ENCODE measurements at regions of chrX and their contacts with region 1.

Region 1: DNA sequence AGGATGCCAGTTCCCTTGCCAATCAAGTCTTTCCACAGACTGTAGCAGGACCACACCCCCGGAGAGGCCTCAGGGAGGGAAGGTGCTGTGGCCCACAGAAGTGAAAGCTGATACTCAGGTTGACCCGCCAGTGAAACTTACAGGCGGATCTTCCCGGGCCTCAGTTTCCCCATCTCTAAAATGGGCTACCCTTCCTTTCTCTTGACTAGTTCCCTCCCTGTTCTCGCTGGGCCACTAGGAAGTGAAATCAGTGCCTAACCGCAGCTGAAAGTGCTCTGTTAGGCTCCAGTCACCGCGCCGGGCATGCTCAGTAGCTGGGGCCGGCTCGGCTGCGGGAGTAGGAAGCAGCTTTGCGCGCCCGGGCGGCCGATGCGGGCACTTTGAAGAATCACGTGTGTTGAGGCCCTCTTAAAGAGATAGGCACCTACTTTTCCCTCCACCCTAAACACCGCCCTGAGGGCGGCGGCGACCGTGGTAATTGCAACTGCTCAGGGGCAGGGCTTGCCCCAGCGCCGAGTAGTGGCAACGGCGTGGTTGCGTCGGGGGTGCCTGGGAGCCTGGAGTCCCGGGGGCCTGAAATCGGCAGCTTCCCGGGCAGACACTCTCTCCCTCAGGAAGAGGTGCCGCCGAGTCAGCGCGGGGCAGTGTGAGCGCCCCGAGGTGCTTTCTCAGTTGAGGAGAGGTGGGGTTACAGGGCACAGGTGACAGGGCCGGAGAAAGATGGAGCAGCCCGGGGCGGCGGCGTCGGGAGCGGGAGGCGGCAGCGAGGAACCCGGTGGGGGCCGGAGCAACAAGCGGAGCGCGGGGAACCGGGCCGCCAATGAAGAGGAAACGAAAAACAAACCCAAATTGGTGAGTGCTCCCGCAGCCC is at the start of gene DIAPH2:
- DNase-seq: peak; percentile 93
- H3K4me3 Mint-ChIP-seq: peak within 1 kb of the TSS; percentile 96
- H3K27ac Mint-ChIP-seq: peak within 1 kb of the TSS; percentile 97
- H3K4me1 Mint-ChIP-seq: peaks cover 18% of the 10 kb centered on the region
- H3K27me3 Mint-ChIP-seq: no peaks in the 10 kb centered on the region
- total RNA-seq, gene DIAPH2: 12.7 and 13.2 TPM in 2 replicates

Region 2: DNA sequence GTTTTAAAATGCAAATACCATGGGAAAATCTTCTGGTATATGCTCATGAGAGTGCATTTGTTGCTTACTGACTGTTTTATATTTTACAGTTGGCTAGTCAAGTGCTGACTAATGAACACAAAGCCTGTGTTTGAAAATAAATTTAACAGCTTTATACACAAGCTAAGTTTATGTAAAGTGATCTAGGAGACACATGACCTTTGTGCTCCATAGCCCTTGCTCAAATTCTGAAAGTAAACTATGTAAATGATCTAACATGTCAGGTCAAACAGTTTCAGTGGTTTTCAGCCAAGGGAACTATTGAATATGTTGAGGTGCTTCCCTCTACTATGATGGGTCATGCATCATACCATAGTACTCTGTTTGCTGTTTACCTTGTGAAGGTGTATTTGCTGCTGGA is 36.8 kb after region 1 on chrX:
- intact Hi-C with region 1: loop called (anchors 5 kb)
- DNase-seq: no peak
- H3K4me3 Mint-ChIP-seq: no peak overlapping the region
- H3K27ac Mint-ChIP-seq: no peak overlapping the region
- H3K4me1 Mint-ChIP-seq: no peaks in the 10 kb centered on the region
- H3K27me3 Mint-ChIP-seq: no peaks in the 10 kb centered on the region

Region 3: DNA sequence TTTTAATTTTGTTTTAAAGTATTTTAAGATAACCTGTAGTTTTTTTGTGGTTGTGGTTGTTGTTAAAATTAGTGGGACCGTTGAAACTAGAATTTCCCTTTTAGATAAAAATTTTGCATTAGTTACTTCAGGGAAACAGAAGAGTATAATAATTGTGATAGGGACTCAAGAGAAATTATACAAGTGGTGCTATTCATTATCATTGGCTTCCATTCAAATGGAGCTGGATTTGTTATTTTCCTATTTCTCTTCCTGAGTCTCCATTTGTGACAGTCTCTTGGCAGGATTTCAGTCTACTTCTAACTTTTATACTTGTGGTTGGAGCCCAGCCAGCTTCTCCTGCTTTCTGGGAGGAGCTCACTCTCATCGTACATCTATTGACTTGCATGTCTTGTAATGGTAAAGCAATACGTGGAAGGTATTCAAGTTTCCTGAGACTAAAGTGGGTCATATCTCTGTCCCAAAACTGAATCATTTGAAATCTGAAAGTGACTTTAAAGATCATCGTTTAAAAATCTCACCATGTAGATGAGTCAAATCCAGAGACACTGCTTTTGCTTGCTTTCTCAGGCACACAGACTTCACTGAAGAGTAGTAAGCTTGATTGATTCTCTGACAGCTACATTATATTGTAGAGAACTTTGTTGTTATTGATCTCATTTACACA is 354.9 kb after region 1 on chrX:
- intact Hi-C with region 1: loop called (anchors 10 kb)
- DNase-seq: no peak
- H3K4me3 Mint-ChIP-seq: no peak overlapping the region
- H3K27ac Mint-ChIP-seq: peak overlapping the region; percentile 43
- H3K4me1 Mint-ChIP-seq: peaks cover 8% of the 10 kb centered on the region
- H3K27me3 Mint-ChIP-seq: no peaks in the 10 kb centered on the region

Measured in activated CD4-positive, alpha-beta T cell treated with anti-CD3 and anti-CD28 coated beads, Interleukin-2, amount 10 ng/mL, durations not matched to agents 24 days and 14 days (primary cell).